Head of caudate nucleus (tissue), 42 donors: ENCODE measurements at regions of chr1 and their contacts with region 1.

Region 1: DNA sequence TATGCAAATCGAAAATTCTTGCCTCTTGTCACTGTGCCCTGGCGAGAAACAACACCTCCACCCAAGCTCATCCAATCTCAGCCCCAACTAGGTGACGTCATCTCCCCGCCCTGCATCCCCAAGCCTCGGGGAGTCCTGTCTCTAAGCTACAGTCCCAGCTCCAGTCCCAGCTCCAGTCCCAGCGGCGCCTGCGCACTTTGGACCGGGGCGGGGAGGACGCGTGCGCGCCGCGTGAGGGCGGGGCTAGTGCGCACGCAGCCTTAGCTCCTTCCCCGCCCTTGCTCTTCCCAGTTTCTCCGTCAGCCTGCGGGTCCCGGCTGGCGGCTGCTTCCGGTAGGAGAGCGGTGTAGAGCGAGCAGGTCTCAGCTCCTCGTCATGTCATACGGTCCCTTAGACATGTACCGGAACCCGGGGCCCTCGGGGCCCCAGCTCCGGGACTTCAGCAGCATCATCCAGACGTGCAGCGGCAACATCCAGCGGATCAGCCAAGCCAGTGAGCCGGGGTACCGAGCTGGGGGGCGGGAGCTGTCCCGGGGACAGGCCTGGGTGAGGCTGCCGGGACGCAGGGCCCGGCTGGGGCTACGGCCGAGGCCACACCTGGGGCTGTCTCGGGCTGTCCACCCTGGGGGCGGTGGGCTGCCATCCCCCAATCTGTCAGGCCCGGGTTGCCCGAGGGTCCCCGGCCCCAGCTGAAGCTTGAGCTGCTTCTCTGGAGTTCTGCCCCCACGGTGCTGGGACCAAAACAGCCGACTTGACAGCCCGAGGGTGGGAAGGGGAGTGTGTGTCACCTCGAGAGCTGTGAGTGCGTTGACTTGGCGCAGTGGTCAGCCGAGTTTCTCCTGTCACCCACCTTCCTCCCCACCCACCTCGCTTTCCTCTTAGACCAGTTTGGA is at the start of gene STX12:
- DNase-seq: peak; percentile 96 to 99 (median 98)

Region 2: GRCh38 chr1:27830621-27831424 is 57.6 kb after region 1 on chr1 and contains the start of gene PPP1R8:
- intact Hi-C with region 1: loop called (anchors 5 kb)
- DNase-seq: peak; percentile 88 to 98 (median 95)

Region 3: GRCh38 chr1:27858072-27858958 is 85.1 kb after region 1 on chr1:
- intact Hi-C with region 1: no loop called
- DNase-seq: peak; percentile 66 to 96 (median 91)

Region 4: GRCh38 chr1:27992276-27992675 is 219.1 kb after region 1 on chr1:
- intact Hi-C with region 1: no loop called
- DNase-seq: no peak